ENCODE measurements at regions of chr16 and their contacts with region 1.

Region 1: DNA sequence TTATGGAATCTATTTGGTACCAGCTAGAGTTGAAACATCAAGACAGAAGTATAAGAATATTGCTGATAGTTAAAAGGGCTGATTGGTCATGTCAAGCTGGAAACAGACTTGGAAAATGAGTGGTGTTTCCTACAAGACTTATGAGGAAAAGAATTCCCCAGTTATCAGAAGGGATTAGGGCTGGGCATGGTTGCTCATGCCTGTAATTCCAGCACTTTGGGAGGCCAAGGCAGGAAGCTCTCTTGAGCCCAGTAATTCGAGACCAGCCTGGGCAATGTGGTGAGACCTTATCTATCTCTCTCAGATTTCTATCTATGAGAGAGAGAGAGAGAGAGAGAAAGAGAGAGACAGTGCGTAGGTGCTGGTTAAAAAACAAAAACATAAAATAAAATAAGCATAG is 139.5 kb upstream of the PMFBP1 start:
- DNase-seq: no peak
- H3K4me3 ChIP-seq: no peak overlapping the region
- CTCF ChIP-seq: no peak

Region 2: GRCh38 chr16:72291531-72291981 is 19.9 kb before region 1 on chr16:
- CTCF ChIA-PET with region 1: interaction called, 3 read pairs
- POLR2A ChIA-PET with region 1: interaction called, 15 read pairs
- DNase-seq: peak; percentile 92
- H3K4me3 ChIP-seq: no peak overlapping the region
- CTCF ChIP-seq: no peak

Region 3: GRCh38 chr16:72332926-72333325 is 21.5 kb after region 1 on chr16:
- CTCF ChIA-PET with region 1: no interaction called
- POLR2A ChIA-PET with region 1: no interaction called
- DNase-seq: no peak
- H3K4me3 ChIP-seq: no peak overlapping the region
- CTCF ChIP-seq: no peak

Measured in AG04449 (cell line).